ENCODE measurements at regions of chr20 and their contacts with region 1.

Region 1: DNA sequence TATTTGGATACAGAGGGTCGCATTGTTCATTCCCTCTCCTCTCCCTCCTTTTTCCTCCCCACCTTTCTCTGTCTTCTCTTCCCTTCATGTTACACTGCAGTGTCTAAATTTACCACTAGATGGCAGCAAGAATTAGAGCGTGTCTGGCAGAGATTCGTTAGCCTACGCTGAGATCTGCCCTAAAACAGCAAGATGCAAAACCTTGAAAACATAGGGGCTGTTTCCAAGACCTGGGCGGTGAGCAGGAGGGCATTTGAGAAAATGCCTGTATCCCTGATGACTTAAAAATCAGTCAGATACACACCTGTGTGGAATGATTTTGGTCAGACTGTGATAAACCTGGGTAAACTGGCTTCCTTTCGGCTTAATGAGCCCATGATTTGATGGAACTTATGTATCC is 101.5 kb upstream of the ISM1 start:
- DNase-seq: peak; percentile 30
- CTCF ChIP-seq: peak; percentile 89

Region 2: GRCh38 chr20:13554706-13555105 is 435.1 kb after region 1 on chr20:
- in situ Hi-C with region 1: loop called (anchors 25 kb)
- DNase-seq: no peak
- CTCF ChIP-seq: no peak

Region 3: DNA sequence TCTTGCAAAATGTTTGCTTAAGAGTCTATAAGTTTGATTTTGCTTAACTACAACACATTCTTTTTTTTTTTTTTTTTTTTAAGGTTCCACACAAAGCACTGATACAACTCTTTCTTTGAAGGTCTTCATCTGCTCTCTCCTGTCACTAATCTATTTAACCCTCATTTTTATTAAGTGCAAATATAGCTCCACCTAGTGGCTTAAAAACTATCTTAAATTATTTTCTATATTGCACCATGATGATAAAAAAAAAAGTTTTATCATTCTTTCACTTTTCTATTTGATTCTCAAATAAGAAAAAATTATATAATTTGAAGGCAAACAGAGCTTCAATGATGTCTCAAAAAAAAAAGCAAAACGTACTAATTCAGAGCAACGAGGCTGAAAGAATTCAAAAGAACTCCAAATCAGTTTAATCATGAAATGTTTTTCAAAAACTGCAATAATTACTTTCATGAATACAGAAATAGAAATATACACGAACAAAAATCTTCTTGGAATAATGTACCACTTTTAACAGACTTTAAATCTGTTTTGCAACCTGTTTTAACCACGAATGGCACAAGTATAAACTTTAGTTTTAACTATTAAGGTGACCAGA is 652.4 kb after region 1 on chr20:
- in situ Hi-C with region 1: loop called (anchors 25 kb)
- DNase-seq: no peak
- CTCF ChIP-seq: no peak